Right cardiac atrium (tissue), 5 donors: ENCODE measurements at regions of chr1 and their contacts with region 1.

Region 1: GRCh38 chr1:162056043-162056442 is 13.4 kb upstream of the NOS1AP start:
- DNase-seq: peak; percentile 49 to 72 (median 59)
- ATAC-seq: peak; percentile 91 to 95
- H3K4me3 ChIP-seq: no peak overlapping the region
- H3K27ac ChIP-seq: no peak overlapping the region
- H3K4me1 ChIP-seq: no peaks in the 10 kb centered on the region
- H3K27me3 ChIP-seq: no peaks in the 10 kb centered on the region

Region 2: GRCh38 chr1:162113419-162113818 is 57.4 kb after region 1 on chr1:
- intact Hi-C with region 1: no loop called
- DNase-seq: no peak
- ATAC-seq: no peak
- H3K4me3 ChIP-seq: no peak overlapping the region
- H3K27ac ChIP-seq: no peak overlapping the region
- H3K4me1 ChIP-seq: no peaks in the 10 kb centered on the region
- H3K27me3 ChIP-seq: no peaks in the 10 kb centered on the region

Region 3: GRCh38 chr1:162159515-162159914 is 103.5 kb after region 1 on chr1:
- intact Hi-C with region 1: no loop called
- DNase-seq: no peak
- ATAC-seq: no peak
- H3K4me3 ChIP-seq: no peak overlapping the region
- H3K27ac ChIP-seq: no peak overlapping the region
- H3K4me1 ChIP-seq: no peaks in the 10 kb centered on the region
- H3K27me3 ChIP-seq: no peaks in the 10 kb centered on the region

Region 4: GRCh38 chr1:162276493-162276892 is 220.4 kb after region 1 on chr1:
- intact Hi-C with region 1: loop called (anchors 2 to 10 kb)
- DNase-seq: no peak
- ATAC-seq: no peak
- H3K4me3 ChIP-seq: no peak overlapping the region
- H3K27ac ChIP-seq: no peak overlapping the region
- H3K4me1 ChIP-seq: no peaks in the 10 kb centered on the region
- H3K27me3 ChIP-seq: no peaks in the 10 kb centered on the region

Region 5: GRCh38 chr1:162391790-162392563 is 335.9 kb after region 1 on chr1:
- intact Hi-C with region 1: loop called (anchors 5 to 10 kb)
- DNase-seq: no peak
- ATAC-seq: no peak
- H3K4me3 ChIP-seq: no peak overlapping the region
- H3K27ac ChIP-seq: no peak overlapping the region
- H3K4me1 ChIP-seq: no peaks in the 10 kb centered on the region
- H3K27me3 ChIP-seq: no peaks in the 10 kb centered on the region